Caco-2 (cell line): ENCODE measurements at regions of chr19 and their contacts with region 1.

Region 1: GRCh38 chr19:50203281-50204080 is at the start of gene MYH14:
- DNase-seq: peak; percentile 94 to 98
- H3K4me3 ChIP-seq: peak within 1 kb of the TSS; percentile 68
- H3K4me3 Mint-ChIP-seq: peak within 1 kb of the TSS; percentile 93
- H3K27ac Mint-ChIP-seq: peak within 1 kb of the TSS; percentile 97
- H3K4me1 ChIP-seq: peaks cover 12% of the 10 kb centered on the region
- H3K4me1 Mint-ChIP-seq: peaks cover 15% of the 10 kb centered on the region
- H3K27me3 ChIP-seq: no peaks in the 10 kb centered on the region
- H3K27me3 Mint-ChIP-seq: no peaks in the 10 kb centered on the region
- CTCF ChIP-seq: no peak
- total RNA-seq, gene MYH14: 78.3 and 89.8 TPM in 2 replicates

Region 2: GRCh38 chr19:50230379-50231351 is 27.2 kb after region 1 on chr19:
- CTCF ChIA-PET with region 1: interaction called, 5 read pairs
- POLR2A ChIA-PET with region 1: interaction called, 7 read pairs
- intact Hi-C with region 1: loop called (anchors 1 kb)
- DNase-seq: no peak
- H3K4me3 ChIP-seq: no peak overlapping the region
- H3K4me3 Mint-ChIP-seq: no peak overlapping the region
- H3K27ac Mint-ChIP-seq: peak overlapping the region; percentile 64
- H3K4me1 ChIP-seq: peaks cover 5% of the 10 kb centered on the region; the same call in 1 of the 2 replicates
- H3K4me1 Mint-ChIP-seq: peaks cover 9% of the 10 kb centered on the region
- H3K27me3 ChIP-seq: no peaks in the 10 kb centered on the region
- H3K27me3 Mint-ChIP-seq: no peaks in the 10 kb centered on the region
- CTCF ChIP-seq: no peak

Region 3: GRCh38 chr19:50357178-50358100 is 154.0 kb after region 1 on chr19:
- CTCF ChIA-PET with region 1: no interaction called
- POLR2A ChIA-PET with region 1: no interaction called
- intact Hi-C with region 1: no loop called
- DNase-seq: peak; percentile 71 to 82
- H3K4me3 ChIP-seq: peak overlapping the region; percentile 36
- H3K4me3 Mint-ChIP-seq: peak overlapping the region; percentile 68
- H3K27ac Mint-ChIP-seq: no peak overlapping the region
- H3K4me1 ChIP-seq: no peaks in the 10 kb centered on the region
- H3K4me1 Mint-ChIP-seq: no peaks in the 10 kb centered on the region
- H3K27me3 ChIP-seq: no peaks in the 10 kb centered on the region
- H3K27me3 Mint-ChIP-seq: no peaks in the 10 kb centered on the region
- CTCF ChIP-seq: peak; percentile 83 to 94